AG04449 (cell line): ENCODE measurements at regions of chr20 and their contacts with region 1.

Region 1: GRCh38 chr20:62793912-62794724 is 2.2 kb upstream of the MRGBP start:
- DNase-seq: peak; percentile 49
- H3K4me3 ChIP-seq: peak overlapping the region; percentile 71
- CTCF ChIP-seq: no peak

Region 2: GRCh38 chr20:62500237-62500864 is 293.8 kb before region 1 on chr20:
- CTCF ChIA-PET with region 1: interaction called, 12 read pairs
- POLR2A ChIA-PET with region 1: no interaction called
- DNase-seq: no peak
- H3K4me3 ChIP-seq: no peak overlapping the region
- CTCF ChIP-seq: peak; percentile 93

Region 3: DNA sequence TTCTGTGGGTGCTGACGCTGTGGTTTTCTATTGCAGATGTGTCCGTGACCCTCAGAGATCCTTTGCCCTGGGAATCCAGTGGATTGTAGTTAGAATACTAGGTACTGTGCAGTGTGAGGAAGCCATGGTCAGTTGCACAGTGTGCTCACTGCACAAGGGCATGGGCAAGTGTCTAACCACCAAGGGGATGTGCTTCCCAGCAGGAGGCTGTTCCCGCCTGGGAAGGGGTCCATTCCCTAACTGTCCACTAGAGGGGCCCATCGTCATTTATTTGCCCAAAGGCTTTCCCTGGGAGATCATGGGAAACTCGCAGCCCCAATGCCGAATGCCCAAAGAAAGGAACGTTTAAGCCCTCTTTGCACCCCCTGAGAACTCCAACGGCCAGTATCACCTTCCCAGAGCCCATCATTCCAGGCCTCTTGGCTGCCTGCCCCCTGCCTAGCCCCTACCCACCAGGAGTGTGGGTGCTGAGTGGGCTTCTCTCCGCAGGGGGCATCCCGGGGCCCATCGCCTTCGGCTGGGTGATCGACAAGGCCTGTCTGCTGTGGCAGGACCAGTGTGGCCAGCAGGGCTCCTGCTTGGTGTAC is 125.6 kb before region 1 on chr20:
- CTCF ChIA-PET with region 1: interaction called, 262 read pairs
- POLR2A ChIA-PET with region 1: no interaction called
- DNase-seq: no peak
- H3K4me3 ChIP-seq: no peak overlapping the region
- CTCF ChIP-seq: peak; percentile 85

Region 4: GRCh38 chr20:62685781-62686555 is 108.2 kb before region 1 on chr20:
- CTCF ChIA-PET with region 1: interaction called, 18 read pairs
- POLR2A ChIA-PET with region 1: no interaction called
- DNase-seq: no peak
- H3K4me3 ChIP-seq: no peak overlapping the region
- CTCF ChIP-seq: no peak

Region 5: GRCh38 chr20:62717933-62718332 is 76.2 kb before region 1 on chr20:
- CTCF ChIA-PET with region 1: interaction called, 10 read pairs
- POLR2A ChIA-PET with region 1: no interaction called
- DNase-seq: no peak
- H3K4me3 ChIP-seq: no peak overlapping the region
- CTCF ChIP-seq: no peak

Region 6: GRCh38 chr20:62808211-62808865 is 14.2 kb after region 1 on chr20:
- CTCF ChIA-PET with region 1: interaction called, 28 read pairs
- POLR2A ChIA-PET with region 1: interaction called, 5 read pairs
- DNase-seq: no peak
- H3K4me3 ChIP-seq: no peak overlapping the region
- CTCF ChIP-seq: peak; percentile 92